A549 (cell line): ENCODE measurements at regions of chr12 and their contacts with region 1.

Region 1: DNA sequence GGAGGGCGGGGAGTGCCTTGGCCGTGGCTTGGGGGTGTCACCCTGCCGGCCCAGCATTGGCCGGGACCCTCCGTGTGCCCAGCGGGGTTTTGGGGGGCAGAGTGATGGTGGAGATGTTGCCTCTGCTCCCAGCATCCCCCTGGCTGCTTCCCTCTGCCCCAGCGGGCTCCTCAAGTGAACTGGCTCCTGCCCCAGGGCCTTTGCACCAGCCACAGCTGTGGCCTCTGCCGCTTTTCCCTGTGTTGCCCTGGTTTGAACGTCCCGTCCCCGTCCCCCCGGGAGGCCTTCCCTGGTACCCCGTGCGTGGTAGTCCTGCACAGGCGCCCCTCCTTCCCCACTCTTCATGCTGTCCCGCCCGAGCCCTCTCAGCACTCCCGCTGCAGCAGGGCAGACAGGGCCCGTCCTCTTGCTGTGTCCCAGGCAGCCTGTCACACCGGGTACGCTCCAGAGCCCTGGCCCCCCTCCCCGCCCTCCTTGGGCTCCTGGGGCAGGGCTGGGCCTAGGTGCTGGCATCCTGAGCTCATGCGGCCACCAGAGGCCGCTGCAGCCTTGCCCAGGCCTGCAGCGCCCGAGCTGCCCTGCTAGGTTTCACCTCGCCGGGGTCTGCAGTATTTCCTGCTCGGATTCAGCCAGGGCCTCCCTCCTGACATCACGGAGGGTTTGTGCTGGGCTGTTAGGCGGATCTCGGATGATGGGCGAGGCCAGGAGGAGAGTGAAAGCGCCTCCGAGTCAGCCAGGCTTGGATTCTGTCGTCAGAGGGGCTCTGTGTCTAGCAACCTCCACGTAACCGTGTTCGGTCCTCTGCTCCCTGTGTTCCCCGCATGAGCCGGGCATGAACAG is 9.5 kb downstream of the NOC4L start:
- DNase-seq: peak; percentile 82 to 85
- ATAC-seq: peak; percentile 85 to 98
- H3K4me3 ChIP-seq: no peak overlapping the region
- H3K27ac ChIP-seq: no peak overlapping the region
- H3K4me1 ChIP-seq: no peaks in the 10 kb centered on the region
- CTCF ChIP-seq: peak; percentile 94
- EP300 ChIP-seq: no peak
- POLR2A ChIP-seq: no peak
- RAD21 ChIP-seq: peak; percentile 92 to 95

Region 2: DNA sequence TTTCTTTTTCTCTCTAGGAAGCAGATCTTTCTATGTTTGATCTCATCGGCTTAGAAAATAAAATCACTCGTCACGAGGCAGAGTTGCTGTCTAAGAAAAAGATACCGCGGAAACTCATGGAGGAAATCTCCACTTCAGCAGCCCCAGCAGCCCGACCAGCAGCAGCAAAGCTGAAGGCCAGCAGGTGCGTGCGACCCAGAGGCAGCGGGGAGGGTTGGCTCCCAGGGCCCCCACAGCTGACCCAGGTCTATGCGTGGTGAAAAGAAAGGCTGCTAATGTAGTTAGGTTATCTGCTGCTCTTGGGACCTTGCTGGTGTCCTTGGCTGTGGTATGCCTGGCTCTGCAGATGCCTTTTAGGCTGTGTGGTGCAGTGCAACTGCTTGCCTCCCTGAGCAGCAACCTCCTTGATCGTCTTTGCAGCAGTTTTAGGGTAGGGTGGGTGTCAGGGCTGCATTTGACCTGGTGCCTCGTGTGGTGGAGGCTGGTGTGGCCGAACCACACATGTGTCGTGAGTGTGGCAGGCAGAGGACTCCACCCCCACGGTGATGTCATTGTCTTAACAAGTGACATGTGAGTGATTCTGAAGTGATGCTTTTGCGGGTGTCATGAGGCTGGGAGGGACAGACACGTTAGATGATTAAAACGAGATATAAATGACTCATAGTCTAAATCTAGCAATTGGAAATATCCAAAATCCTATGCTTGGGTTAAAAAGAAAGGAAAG is 135.4 kb before region 1 on chr12:
- CTCF ChIA-PET with region 1: no interaction called
- POLR2A ChIA-PET with region 1: no interaction called
- DNase-seq: peak in 1 of 2 experiments; percentile 20
- ATAC-seq: no peak; a peak in 2 of 6 replicates
- H3K4me3 ChIP-seq: no peak overlapping the region
- H3K27ac ChIP-seq: no peak overlapping the region
- H3K4me1 ChIP-seq: peaks cover 5% of the 10 kb centered on the region; the same call in 1 of the 3 replicates
- CTCF ChIP-seq: no peak
- EP300 ChIP-seq: no peak
- POLR2A ChIP-seq: no peak
- RAD21 ChIP-seq: no peak

Region 3: DNA sequence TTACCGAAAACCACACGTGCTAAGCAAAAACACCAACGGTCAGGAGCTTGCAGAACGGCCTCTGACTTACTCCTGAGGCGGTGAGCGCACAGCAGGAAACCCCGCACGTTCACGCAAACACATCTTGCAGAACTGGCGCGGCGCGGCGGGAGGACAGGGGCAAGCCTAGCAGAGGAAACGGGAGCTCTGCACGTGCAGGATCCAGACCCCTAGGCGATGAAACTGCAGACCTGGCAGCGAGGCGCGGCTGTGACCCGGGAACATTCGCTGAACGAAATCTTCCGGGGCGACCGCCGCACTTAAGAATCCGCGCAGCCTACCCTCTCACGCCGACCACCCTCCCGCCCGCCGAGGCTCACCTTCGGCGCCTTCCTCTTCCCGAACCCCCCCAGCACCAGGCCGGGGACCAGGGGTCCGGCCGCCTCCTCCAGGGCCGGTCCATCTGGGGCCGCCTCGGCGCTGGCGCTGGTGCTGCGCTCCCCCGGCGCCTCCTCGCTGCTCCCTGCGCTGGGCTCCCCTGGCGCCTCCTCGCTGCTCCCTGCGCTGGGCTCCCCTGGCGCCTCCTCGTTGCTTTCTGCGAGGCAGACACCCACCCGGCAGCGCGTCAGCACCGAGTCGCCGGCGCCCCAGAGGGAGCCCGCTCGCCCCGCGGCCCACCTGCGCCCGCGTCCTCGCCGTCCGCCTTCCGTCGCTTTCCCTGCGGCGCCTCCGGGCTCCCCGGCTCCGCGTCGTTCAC is 10.2 kb before region 1 on chr12:
- CTCF ChIA-PET with region 1: interaction called, 13 read pairs
- POLR2A ChIA-PET with region 1: no interaction called
- DNase-seq: no peak
- ATAC-seq: peak; percentile 4 to 12; a peak in 4 of 6 replicates
- H3K4me3 ChIP-seq: peak overlapping the region; percentile 99
- H3K27ac ChIP-seq: peak overlapping the region; percentile 94 to 98
- H3K4me1 ChIP-seq: peaks cover 16% of the 10 kb centered on the region; the same call in 2 of the 3 replicates
- CTCF ChIP-seq: no peak
- EP300 ChIP-seq: no peak
- POLR2A ChIP-seq: no peak
- RAD21 ChIP-seq: no peak

Region 4: GRCh38 chr12:132196038-132196872 is 42.5 kb after region 1 on chr12:
- CTCF ChIA-PET with region 1: no interaction called
- POLR2A ChIA-PET with region 1: no interaction called
- DNase-seq: no peak
- ATAC-seq: no peak
- H3K4me3 ChIP-seq: no peak overlapping the region
- H3K27ac ChIP-seq: no peak overlapping the region
- H3K4me1 ChIP-seq: no peaks in the 10 kb centered on the region
- CTCF ChIP-seq: no peak
- EP300 ChIP-seq: no peak
- POLR2A ChIP-seq: no peak
- RAD21 ChIP-seq: no peak

Region 5: GRCh38 chr12:132218915-132219314 is 65.2 kb after region 1 on chr12:
- CTCF ChIA-PET with region 1: interaction called, 10 read pairs
- POLR2A ChIA-PET with region 1: no interaction called
- DNase-seq: peak; percentile 51 to 68
- ATAC-seq: peak; percentile 33 to 74; a peak in 3 of 6 replicates
- H3K4me3 ChIP-seq: no peak overlapping the region
- H3K27ac ChIP-seq: no peak overlapping the region
- H3K4me1 ChIP-seq: peaks cover 6% of the 10 kb centered on the region; the same call in 1 of the 3 replicates
- CTCF ChIP-seq: peak; percentile 44
- EP300 ChIP-seq: no peak
- POLR2A ChIP-seq: no peak
- RAD21 ChIP-seq: peak; percentile 28 to 37; a peak in 3 of 5 replicates

Region 6: GRCh38 chr12:132669166-132670015 is 515.7 kb after region 1 on chr12:
- CTCF ChIA-PET with region 1: no interaction called
- POLR2A ChIA-PET with region 1: no interaction called
- DNase-seq: no peak
- ATAC-seq: no peak
- H3K4me3 ChIP-seq: no peak overlapping the region
- H3K27ac ChIP-seq: no peak overlapping the region
- H3K4me1 ChIP-seq: no peaks in the 10 kb centered on the region
- CTCF ChIP-seq: no peak
- EP300 ChIP-seq: no peak
- POLR2A ChIP-seq: no peak
- RAD21 ChIP-seq: no peak